HAP-1 (cell line): ENCODE measurements at regions of chr5 and their contacts with region 1.

Region 1: DNA sequence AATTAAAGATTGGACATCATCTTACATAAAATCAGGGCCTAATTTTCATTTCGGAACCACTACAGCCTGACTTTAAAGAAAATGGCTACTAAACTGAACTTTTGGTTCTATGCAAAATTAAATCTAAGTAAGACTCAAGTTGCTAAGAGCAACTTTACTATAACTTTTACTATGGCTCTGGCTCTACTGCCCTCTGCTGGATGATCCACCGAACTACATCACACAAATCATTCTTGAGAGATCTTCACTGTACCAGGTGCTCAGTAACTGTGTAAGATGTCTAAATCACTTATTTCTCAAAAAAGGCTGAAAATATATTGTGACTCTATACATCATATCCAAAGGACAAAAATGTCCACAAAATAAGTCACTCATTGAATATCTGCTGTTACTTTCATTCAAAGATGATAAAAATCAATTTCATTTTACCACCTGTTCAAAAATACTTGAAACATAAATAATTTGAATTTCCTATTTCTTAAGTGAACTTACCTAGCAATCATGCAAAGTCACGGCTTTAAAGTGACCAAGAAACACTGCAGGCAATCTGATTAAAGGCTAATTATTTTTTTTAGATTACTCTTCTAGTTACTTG is 13.5 kb downstream of the MOCS2 start:
- DNase-seq: peak; percentile 35 to 72
- H3K4me3 ChIP-seq: no peak overlapping the region
- H3K4me1 ChIP-seq: peaks cover 4% of the 10 kb centered on the region
- H3K27me3 ChIP-seq: no peaks in the 10 kb centered on the region

Region 2: DNA sequence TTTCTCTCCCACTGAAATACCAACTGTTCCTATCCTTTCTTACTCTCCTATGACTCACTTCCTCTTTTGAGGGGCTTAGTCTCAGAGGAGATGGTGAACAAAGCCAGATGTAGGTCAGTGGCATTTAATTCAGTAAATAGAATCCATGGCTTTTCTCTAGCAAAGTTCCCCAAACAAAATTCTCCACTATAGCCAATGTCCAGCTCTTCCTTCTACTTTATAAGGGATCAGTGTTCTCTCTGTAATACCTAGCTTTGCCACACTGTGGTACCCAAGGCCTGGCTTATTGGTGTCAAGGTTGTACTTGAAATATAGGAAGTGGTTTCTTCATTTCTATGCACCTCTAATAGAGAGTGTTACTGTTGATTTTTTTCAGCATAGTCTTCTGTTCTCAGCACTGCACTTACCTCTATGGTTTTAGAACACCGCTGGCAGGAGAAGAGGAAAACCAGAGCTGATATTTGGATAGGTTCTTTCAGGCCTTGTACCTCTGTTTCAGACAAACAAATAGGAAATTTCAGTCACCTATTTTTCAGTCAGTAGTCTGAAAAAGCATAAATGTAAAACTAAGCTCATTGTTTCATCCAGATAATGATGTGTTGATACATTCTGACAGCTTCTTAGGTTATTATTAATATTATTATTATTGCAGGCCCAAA is 147.5 kb before region 1 on chr5:
- in situ Hi-C with region 1: loop called (anchors 5 kb)
- DNase-seq: peak; percentile 67 to 74
- H3K4me3 ChIP-seq: no peak overlapping the region
- H3K4me1 ChIP-seq: no peaks in the 10 kb centered on the region
- H3K27me3 ChIP-seq: no peaks in the 10 kb centered on the region